Gastrocnemius medialis (tissue), 4 donors: ENCODE measurements at regions of chr3 and their contacts with region 1.

Region 1: GRCh38 chr3:100089812-100090668 is 24.3 kb downstream of the FILIP1L start:
- DNase-seq: peak; percentile 35 to 82
- ATAC-seq: peak; percentile 80 to 95
- H3K4me3 ChIP-seq: no peak overlapping the region
- H3K27ac ChIP-seq: peak overlapping the region; percentile 78 to 90 (median 81)
- H3K4me1 ChIP-seq: peaks cover 63 to 76% of the 10 kb centered on the region in 2 donors
- H3K27me3 ChIP-seq: no peaks in the 10 kb centered on the region
- CTCF ChIP-seq: peak; percentile 31 to 60 (median 52)
- POLR2A ChIP-seq: no peak

Region 2: DNA sequence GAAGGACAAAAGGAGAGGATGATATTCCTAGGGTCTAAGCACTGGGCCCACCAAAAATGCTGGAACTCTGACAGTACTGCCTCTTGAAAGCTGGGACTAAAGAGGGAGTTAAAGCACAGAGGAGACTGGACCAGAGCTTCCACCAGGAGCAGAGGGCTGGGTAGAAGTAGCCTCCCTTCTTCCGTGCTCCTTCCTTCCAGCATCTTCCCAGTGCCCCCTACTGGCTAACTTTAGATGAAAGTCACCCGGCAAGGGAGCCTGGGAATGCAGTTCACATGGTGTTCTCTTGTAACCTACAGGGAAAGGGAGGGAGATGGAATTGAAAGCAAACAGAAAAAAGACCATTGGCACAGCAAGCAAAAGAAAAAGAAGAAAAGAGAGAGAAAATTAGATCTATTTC is 557.8 kb before region 1 on chr3:
- in situ Hi-C with region 1: no loop called
- intact Hi-C with region 1: no loop called
- DNase-seq: no peak
- ATAC-seq: no peak
- H3K4me3 ChIP-seq: no peak overlapping the region
- H3K27ac ChIP-seq: no peak overlapping the region
- H3K4me1 ChIP-seq: no peaks in the 10 kb centered on the region
- H3K27me3 ChIP-seq: no peaks in the 10 kb centered on the region
- CTCF ChIP-seq: peak in 2 of 5 experiments; percentile 7 to 8
- POLR2A ChIP-seq: no peak

Region 3: GRCh38 chr3:99542771-99543518 is 547.1 kb before region 1 on chr3:
- in situ Hi-C with region 1: no loop called
- intact Hi-C with region 1: no loop called
- DNase-seq: no peak
- ATAC-seq: no peak
- H3K4me3 ChIP-seq: no peak overlapping the region
- H3K27ac ChIP-seq: peak overlapping the region in 1 of 4 donors; percentile 7
- H3K4me1 ChIP-seq: peaks cover 0 to 5% of the 10 kb centered on the region in 2 donors
- H3K27me3 ChIP-seq: no peaks in the 10 kb centered on the region
- CTCF ChIP-seq: no peak
- POLR2A ChIP-seq: no peak

Region 4: GRCh38 chr3:100105541-100105940 is 15.5 kb after region 1 on chr3:
- in situ Hi-C with region 1: no loop called
- intact Hi-C with region 1: no loop called
- DNase-seq: no peak
- ATAC-seq: peak in 1 of 2 donors; percentile 54
- H3K4me3 ChIP-seq: no peak overlapping the region
- H3K27ac ChIP-seq: peak overlapping the region; percentile 84 to 92 (median 86)
- H3K4me1 ChIP-seq: peaks cover 80 to 84% of the 10 kb centered on the region in 2 donors
- H3K27me3 ChIP-seq: no peaks in the 10 kb centered on the region
- CTCF ChIP-seq: no peak
- POLR2A ChIP-seq: no peak

Region 5: DNA sequence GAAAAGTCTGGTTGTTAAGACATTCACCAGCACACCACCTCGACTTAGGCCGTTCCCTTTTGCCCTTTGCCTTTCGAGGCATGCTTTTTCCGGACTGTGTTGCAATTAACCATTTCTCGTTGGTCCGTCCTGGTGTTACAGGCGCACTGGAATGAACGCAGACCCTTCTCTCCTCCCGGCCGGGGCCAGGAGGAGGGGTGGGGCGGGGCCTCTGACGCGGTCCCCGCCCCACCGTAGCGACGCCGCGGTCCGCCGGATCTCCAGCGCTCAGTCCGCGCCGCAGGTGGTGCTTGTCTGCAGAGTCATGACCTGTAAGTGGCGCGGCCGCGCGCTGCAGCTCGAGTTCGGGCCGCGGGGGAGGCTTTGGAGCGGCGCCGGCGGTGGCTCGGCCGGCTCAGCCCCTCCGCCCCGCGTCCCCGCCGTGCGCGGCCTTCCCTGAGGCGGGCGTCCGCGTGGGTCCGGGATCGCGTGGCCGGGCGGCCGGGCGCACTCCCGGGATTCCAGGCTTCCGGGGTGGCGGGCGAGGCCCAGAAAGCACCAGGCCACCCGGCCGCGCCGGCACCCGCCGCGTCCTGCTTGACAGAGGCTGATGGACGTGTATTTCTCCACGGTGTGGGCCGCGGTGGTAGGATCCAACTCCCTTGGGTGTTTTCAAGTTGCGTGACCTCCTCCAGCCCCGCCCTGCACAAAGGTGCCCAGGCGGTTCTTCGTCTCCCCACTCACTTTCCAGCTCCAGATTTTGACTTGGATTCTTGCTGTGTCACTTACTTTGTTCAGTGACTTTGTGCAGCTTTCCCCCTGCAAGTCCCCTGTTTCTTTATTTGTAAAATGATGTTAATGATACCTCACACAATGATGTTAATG is 244.7 kb after region 1 on chr3 and contains the start of gene NIT2:
- in situ Hi-C with region 1: no loop called
- intact Hi-C with region 1: loop called (anchors 10 kb)
- DNase-seq: peak; percentile 69 to 85
- ATAC-seq: peak; percentile 89 to 91
- H3K4me3 ChIP-seq: peak within 1 kb of the TSS; percentile 59 to 68 (median 64)
- H3K27ac ChIP-seq: peak within 1 kb of the TSS; percentile 85 to 89 (median 88)
- H3K4me1 ChIP-seq: peaks cover 0 to 10% of the 10 kb centered on the region in 2 donors
- H3K27me3 ChIP-seq: no peaks in the 10 kb centered on the region
- CTCF ChIP-seq: peak in 1 of 5 experiments; percentile 15
- POLR2A ChIP-seq: peak; percentile 76 to 78
- total RNA-seq, gene NIT2: 13.5 to 45.2 (median 24.2) TPM

Region 6: DNA sequence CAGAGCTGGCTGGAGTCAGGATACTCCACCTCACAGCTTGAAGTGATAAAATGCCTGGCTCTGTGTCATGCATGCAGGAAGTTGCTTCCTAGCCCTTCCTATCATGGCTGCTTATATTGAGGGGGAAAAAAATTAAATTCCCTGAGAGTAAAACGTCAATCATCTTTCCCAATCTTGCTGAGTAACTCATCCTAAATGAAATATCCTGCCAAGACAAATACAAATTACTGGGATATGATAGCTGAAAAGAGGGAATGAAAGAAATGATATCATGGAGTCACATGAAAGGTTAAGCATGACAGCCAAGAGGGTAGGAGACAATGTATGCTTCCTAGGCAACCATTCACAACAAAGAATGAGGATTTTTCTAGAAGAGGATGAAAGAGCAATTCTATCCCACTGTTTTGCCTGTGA is 792.5 kb after region 1 on chr3:
- in situ Hi-C with region 1: no loop called
- intact Hi-C with region 1: no loop called
- DNase-seq: peak in 1 of 2 donors; percentile 21
- ATAC-seq: peak in 1 of 2 donors; percentile 31
- H3K4me3 ChIP-seq: no peak overlapping the region
- H3K27ac ChIP-seq: no peak overlapping the region
- H3K4me1 ChIP-seq: peaks cover 0 to 12% of the 10 kb centered on the region in 2 donors
- H3K27me3 ChIP-seq: no peaks in the 10 kb centered on the region
- CTCF ChIP-seq: no peak
- POLR2A ChIP-seq: no peak